ENCODE measurements at regions of chr4 and their contacts with region 1.

Region 1: GRCh38 chr4:169311643-169312365 is 41.0 kb upstream of the SH3RF1 start:
- DNase-seq: peak; percentile 73
- ATAC-seq: peak; percentile 96
- H3K4me3 ChIP-seq: peak overlapping the region; percentile 40 to 48 (median 44); a peak in 5 of 6 replicates
- H3K27ac ChIP-seq: no peak overlapping the region
- H3K4me1 ChIP-seq: peaks cover 50% of the 10 kb centered on the region
- H3K27me3 ChIP-seq: no peaks in the 10 kb centered on the region
- CTCF ChIP-seq: peak; percentile 71
- EP300 ChIP-seq: no peak
- POLR2A ChIP-seq: no peak
- RAD21 ChIP-seq: peak; percentile 59

Region 2: DNA sequence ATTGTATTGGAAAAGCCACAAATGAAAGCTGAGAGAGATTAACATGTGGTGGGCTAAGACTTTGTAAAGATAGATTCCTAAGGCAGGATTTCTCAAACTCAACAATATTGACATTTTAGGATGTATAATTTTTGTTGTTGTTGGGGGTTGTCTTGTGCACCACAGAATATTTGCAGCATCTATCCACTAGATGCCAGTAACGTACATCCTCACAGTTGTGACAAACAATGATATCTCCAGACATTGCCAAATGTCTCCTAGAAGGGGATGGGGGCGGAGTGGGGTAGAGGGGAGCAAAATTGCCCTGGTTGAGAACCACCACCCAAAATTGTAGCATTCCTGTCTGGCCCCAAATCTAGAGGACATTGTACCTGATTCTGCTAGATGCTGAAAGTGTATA is 287.0 kb before region 1 on chr4:
- CTCF ChIA-PET with region 1: no interaction called
- POLR2A ChIA-PET with region 1: no interaction called
- in situ Hi-C with region 1: no loop called
- intact Hi-C with region 1: loop called (anchors 5 kb)
- DNase-seq: no peak
- ATAC-seq: peak; percentile 82
- H3K4me3 ChIP-seq: no peak overlapping the region
- H3K27ac ChIP-seq: no peak overlapping the region
- H3K4me1 ChIP-seq: peaks cover under 1% of the 10 kb centered on the region; the same call in 1 of the 2 replicates
- H3K27me3 ChIP-seq: no peaks in the 10 kb centered on the region
- CTCF ChIP-seq: peak; percentile 78
- EP300 ChIP-seq: no peak
- POLR2A ChIP-seq: no peak
- RAD21 ChIP-seq: peak; percentile 39; the same call in 1 of the 2 replicates

Region 3: GRCh38 chr4:169351860-169352259 is 40.1 kb after region 1 on chr4:
- CTCF ChIA-PET with region 1: no interaction called
- POLR2A ChIA-PET with region 1: no interaction called
- in situ Hi-C with region 1: no loop called
- intact Hi-C with region 1: no loop called
- DNase-seq: no peak
- ATAC-seq: no peak
- H3K4me3 ChIP-seq: no peak overlapping the region
- H3K27ac ChIP-seq: no peak overlapping the region
- H3K4me1 ChIP-seq: no peaks in the 10 kb centered on the region
- H3K27me3 ChIP-seq: no peaks in the 10 kb centered on the region
- CTCF ChIP-seq: no peak
- EP300 ChIP-seq: no peak
- POLR2A ChIP-seq: no peak
- RAD21 ChIP-seq: no peak

Measured in HepG2 (cell line).